IMR-90 (cell line): ENCODE measurements at regions of chr1 and their contacts with region 1.

Region 1: DNA sequence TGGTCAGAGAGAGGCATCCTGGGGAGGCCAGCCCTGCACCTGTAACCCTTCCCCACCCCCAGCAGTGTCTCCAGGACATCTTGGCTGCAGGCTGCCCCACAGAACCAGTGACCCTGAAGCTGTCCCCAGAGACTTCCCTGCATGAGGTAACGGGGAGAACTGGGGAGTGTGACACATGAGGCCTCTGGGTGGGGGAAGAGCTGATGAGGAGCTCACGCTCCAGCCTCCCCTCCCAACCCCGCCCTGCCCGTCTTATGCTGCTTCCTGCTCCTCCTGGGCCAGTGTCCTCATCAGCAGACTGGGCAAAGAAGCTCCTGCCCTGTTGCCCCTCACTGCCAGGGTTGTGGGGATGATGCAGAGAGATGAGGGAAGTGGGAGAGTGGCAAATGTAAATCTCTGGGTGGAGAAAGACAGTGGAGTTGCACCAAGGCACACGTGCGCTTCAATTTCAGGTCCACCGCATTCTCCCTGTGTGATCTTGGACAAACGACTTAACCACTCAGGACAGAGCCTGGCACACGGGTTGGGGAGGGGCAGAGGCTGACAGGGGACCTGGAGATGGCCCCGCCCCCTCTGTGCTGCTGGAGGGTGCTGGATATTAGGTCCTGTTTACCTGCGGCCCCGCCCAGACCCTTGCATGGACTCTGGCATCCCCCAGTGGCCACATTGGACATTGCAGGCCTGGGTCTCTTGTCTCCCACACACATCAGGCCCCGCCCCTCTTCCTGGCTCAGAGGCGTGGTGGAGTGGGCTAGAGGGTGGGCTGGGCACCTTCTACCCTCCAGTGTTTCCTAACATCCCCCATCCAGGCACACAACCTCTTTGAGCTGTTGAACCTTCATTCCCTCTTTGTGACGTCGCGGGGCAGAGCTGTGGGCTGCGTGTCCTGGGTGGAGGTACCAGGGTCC is 12.3 kb downstream of the CLCNKB start:
- DNase-seq: peak; percentile 64
- ATAC-seq: peak; percentile 99
- H3K4me3 ChIP-seq: no peak overlapping the region
- H3K27ac ChIP-seq: no peak overlapping the region
- H3K4me1 ChIP-seq: no peaks in the 10 kb centered on the region
- H3K27me3 ChIP-seq: peaks cover 22% of the 10 kb centered on the region
- CTCF ChIP-seq: peak; percentile 88
- POLR2A ChIP-seq: no peak
- RAD21 ChIP-seq: peak; percentile 89

Region 2: GRCh38 chr1:16032388-16033103 is 23.3 kb before region 1 on chr1:
- CTCF ChIA-PET with region 1: no interaction called
- POLR2A ChIA-PET with region 1: no interaction called
- dilution Hi-C with region 1: no loop called
- in situ Hi-C with region 1: no loop called
- intact Hi-C with region 1: loop called (anchors 2 kb)
- DNase-seq: peak; percentile 79
- ATAC-seq: peak; percentile 100
- H3K4me3 ChIP-seq: no peak overlapping the region
- H3K27ac ChIP-seq: no peak overlapping the region
- H3K4me1 ChIP-seq: no peaks in the 10 kb centered on the region
- H3K27me3 ChIP-seq: peaks cover 9% of the 10 kb centered on the region
- CTCF ChIP-seq: peak; percentile 98
- POLR2A ChIP-seq: 0 out of 2 replicates have a peak, but pooled peaks have one; percentile 26
- RAD21 ChIP-seq: peak; percentile 97

Region 3: DNA sequence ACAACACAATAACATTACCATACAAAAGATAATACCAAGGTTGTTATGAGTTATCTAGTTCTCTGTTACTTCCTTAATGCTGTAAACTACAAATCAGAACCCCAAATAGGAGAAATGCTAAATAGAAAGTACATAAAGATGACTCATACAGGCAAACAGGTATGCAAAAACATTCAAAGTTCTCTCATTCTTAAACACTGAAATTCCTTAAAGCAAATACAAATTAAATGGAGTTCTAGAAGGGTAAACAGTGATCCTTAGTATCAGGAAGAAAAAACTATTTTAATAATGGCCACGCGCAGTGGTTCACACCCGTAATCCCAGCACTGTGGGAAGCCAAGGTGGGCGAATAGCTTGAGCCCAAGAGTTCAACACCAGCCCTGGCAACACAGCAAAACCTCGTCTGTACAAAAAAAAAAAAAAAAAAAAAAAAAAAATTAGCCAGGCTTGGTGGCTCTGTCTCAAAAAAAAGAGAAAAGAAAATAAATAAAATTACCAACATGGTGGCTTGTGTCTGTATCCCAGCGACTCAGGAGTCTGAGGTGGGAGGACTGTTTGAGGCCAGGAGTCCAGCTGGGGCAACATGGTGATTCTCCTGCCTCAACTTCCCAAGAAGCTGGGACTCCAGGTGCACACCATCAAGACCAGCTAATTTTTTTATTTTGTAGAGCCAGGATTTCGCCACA is 278.9 kb after region 1 on chr1:
- CTCF ChIA-PET with region 1: no interaction called
- POLR2A ChIA-PET with region 1: no interaction called
- dilution Hi-C with region 1: no loop called
- in situ Hi-C with region 1: no loop called
- intact Hi-C with region 1: no loop called
- DNase-seq: no peak
- ATAC-seq: no peak; the same call in 1 of the 2 replicates
- H3K4me3 ChIP-seq: no peak overlapping the region
- H3K27ac ChIP-seq: no peak overlapping the region
- H3K4me1 ChIP-seq: peaks cover 4% of the 10 kb centered on the region
- H3K27me3 ChIP-seq: no peaks in the 10 kb centered on the region
- CTCF ChIP-seq: no peak
- POLR2A ChIP-seq: no peak
- RAD21 ChIP-seq: no peak